ENCODE measurements at regions of chr10 and their contacts with region 1.

Region 1: DNA sequence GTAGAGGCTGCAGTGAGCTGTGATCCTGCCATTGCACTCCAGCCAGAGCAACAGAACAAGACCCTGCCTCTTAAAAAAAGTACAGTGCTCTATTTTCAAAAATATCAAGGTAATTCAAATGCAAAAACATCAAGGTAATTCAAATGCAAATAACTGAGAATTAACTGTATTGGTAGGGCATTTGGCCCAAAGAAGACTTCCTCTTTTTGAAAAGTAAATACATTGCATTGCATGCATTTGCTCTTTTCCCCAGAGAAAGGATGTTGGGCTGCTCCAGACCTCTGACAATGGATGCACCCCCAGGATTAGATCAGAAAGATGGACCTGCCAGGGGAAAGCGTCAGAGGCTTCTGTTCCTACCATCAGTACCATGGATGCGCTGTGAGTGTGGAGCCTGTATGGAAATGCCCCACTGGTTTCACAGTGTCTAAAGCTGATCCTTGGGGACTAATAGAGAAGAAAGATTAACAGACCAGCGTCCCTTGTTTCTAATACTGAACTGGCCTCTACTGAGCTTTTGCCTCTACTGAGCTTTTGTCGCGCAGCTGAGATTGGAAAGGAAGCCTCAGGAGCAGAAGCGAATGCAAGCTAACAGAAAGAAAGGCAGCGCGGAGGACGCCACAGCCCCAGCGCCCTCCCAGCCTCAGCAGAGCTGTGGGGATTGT is 93.5 kb upstream of the LYZL2 start:
- DNase-seq: no peak
- H3K4me3 Mint-ChIP-seq: no peak overlapping the region
- H3K27ac Mint-ChIP-seq: no peak overlapping the region
- H3K4me1 Mint-ChIP-seq: peaks cover 34% of the 10 kb centered on the region
- H3K27me3 Mint-ChIP-seq: no peaks in the 10 kb centered on the region

Region 2: GRCh38 chr10:30671026-30671616 is 52.0 kb before region 1 on chr10:
- CTCF ChIA-PET with region 1: interaction called, 39 read pairs
- POLR2A ChIA-PET with region 1: no interaction called
- DNase-seq: peak; percentile 28
- H3K4me3 Mint-ChIP-seq: peak overlapping the region; percentile 46
- H3K27ac Mint-ChIP-seq: no peak overlapping the region
- H3K4me1 Mint-ChIP-seq: peaks cover 34% of the 10 kb centered on the region
- H3K27me3 Mint-ChIP-seq: peaks cover 7% of the 10 kb centered on the region

Region 3: GRCh38 chr10:30873411-30873810 is 150.3 kb after region 1 on chr10:
- CTCF ChIA-PET with region 1: no interaction called
- POLR2A ChIA-PET with region 1: no interaction called
- DNase-seq: no peak
- H3K4me3 Mint-ChIP-seq: no peak overlapping the region
- H3K27ac Mint-ChIP-seq: no peak overlapping the region
- H3K4me1 Mint-ChIP-seq: no peaks in the 10 kb centered on the region
- H3K27me3 Mint-ChIP-seq: no peaks in the 10 kb centered on the region